WTC11 (cell line): ENCODE measurements at regions of chr1 and their contacts with region 1.

Region 1: DNA sequence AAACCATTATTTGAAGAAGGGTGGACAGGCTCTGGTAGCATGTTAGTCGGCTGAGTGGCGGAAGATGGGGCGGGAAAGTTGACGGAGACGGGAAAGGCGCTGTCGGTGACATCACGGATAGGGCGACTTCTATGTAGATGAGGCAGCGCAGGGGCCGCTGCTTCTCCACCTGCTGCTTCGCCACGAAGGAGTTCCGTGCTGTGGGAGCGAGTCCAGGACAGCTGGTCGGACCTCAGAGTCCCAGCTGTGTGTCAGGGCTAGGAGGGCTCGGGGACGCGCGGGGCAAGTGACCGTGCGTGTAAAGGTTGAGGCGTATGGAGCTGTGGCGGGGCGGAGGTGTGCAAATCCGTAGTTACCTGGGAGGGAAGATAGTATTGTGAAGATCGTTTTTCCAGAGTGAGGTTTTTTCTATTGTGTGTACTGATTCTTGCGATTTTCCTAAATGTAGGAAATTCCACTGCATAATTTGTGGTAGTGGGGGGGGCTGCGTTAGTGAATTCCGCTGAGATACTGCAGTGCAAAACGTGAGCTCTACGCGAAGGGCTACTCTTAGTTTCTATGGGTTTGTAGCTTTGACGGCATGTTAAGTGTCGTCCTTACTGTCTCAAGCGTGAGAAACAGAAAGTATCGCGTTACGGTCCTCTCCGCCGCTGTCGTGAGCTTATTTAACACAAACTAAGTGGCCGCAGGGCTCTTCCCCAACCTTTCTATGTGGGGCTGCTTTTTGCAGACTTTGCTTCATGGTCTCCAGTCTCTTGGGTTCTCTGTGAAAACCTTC is 111.2 kb upstream of the NBPF11 start:
- DNase-seq: peak; percentile 80
- ATAC-seq: peak; percentile 78
- H3K4me3 Mint-ChIP-seq: peak overlapping the region; percentile 84
- H3K27ac Mint-ChIP-seq: peak overlapping the region; percentile 100
- H3K4me1 Mint-ChIP-seq: peaks cover 31% of the 10 kb centered on the region
- H3K27me3 Mint-ChIP-seq: peaks cover 4% of the 10 kb centered on the region; the same call in 1 of the 2 replicates
- CTCF ChIP-seq: no peak

Region 2: DNA sequence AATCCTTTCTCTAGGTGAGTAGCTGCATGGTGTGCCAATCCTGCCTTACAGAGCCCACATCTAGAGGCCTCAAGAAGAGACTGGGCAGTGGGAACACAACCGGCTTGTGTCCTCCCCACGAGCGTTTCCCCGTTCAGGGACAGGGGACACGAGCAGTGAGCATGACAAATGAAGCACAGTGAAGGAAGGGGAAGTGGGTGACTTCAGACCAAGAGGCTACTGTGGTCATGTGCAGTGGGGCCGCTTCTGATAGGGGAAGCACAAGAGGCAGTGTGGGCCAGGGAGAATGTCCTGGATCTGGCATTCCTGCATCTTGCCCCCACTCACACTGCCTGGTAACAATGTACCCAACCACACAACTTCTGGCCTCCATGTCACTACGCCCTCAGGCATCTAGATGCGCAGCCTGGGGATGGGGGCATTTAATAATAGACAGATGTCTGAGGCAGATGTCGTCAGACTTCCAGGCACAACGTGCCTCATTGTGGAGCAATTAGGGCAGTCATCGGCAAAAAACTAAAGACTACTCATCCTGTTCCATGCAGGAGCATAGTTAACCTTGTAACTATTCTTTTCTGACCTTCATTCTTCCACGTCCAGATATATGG is 44.4 kb after region 1 on chr1:
- CTCF ChIA-PET with region 1: interaction called, 6 read pairs
- POLR2A ChIA-PET with region 1: interaction called, 20 read pairs
- DNase-seq: no peak
- ATAC-seq: no peak
- H3K4me3 Mint-ChIP-seq: no peak overlapping the region
- H3K27ac Mint-ChIP-seq: no peak overlapping the region
- H3K4me1 Mint-ChIP-seq: peaks cover 30% of the 10 kb centered on the region
- H3K27me3 Mint-ChIP-seq: peaks cover 65% of the 10 kb centered on the region
- CTCF ChIP-seq: no peak

Region 3: GRCh38 chr1:148318123-148318903 is 55.0 kb after region 1 on chr1:
- CTCF ChIA-PET with region 1: interaction called, 8 read pairs
- POLR2A ChIA-PET with region 1: interaction called, 10 read pairs
- DNase-seq: peak; percentile 48
- ATAC-seq: peak; percentile 76
- H3K4me3 Mint-ChIP-seq: peak overlapping the region; percentile 85
- H3K27ac Mint-ChIP-seq: peak overlapping the region; percentile 15; the same call in 1 of the 2 replicates
- H3K4me1 Mint-ChIP-seq: peaks cover 16% of the 10 kb centered on the region
- H3K27me3 Mint-ChIP-seq: peaks cover 61% of the 10 kb centered on the region
- CTCF ChIP-seq: no peak

Region 4: GRCh38 chr1:148334339-148335130 is 71.2 kb after region 1 on chr1:
- CTCF ChIA-PET with region 1: interaction called, 8 read pairs
- POLR2A ChIA-PET with region 1: interaction called, 81 read pairs
- DNase-seq: peak; percentile 86
- ATAC-seq: peak; percentile 87
- H3K4me3 Mint-ChIP-seq: peak overlapping the region; percentile 96
- H3K27ac Mint-ChIP-seq: peak overlapping the region; percentile 100
- H3K4me1 Mint-ChIP-seq: peaks cover 23% of the 10 kb centered on the region
- H3K27me3 Mint-ChIP-seq: peaks cover 5% of the 10 kb centered on the region
- CTCF ChIP-seq: no peak

Region 5: DNA sequence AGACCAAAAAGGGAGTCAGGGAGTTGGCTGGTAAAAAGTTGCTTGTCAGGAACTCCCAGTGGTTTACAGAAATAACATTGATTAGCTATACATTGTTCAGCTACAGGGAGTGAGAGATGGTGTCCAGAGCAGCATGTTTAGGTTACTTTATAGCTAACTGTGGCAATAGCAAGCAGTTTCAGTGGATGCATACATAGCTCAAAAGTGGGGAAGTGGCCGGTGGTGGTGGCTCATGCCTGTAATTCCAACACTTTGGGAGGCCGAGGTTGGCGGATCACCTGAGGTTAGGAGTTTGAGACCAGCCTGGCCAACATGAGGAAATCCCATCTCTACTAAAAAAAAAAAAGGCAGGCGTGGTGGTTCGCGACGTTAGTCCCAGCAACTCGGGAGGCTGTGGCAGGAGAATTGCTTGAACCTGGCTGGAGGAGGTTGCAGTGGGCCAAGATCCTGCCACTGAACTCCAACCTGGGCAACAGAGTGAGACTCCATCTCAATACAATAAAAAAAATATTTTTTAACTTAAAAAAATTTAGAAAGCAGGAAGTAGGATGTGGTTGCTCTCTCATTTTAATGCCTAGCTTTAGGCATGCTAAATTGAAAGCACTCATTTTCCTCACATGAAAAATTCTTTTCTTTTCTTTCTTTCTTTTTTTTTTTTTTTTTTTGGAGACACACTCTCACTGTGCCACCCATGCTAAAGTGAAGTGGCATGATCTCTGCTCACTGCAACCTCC is 110.0 kb after region 1 on chr1:
- CTCF ChIA-PET with region 1: no interaction called
- POLR2A ChIA-PET with region 1: no interaction called
- DNase-seq: no peak
- ATAC-seq: no peak
- H3K4me3 Mint-ChIP-seq: no peak overlapping the region
- H3K27ac Mint-ChIP-seq: peak overlapping the region; percentile 71; the same call in 1 of the 2 replicates
- H3K4me1 Mint-ChIP-seq: peaks cover 13% of the 10 kb centered on the region
- H3K27me3 Mint-ChIP-seq: no peaks in the 10 kb centered on the region; the same call in 1 of the 2 replicates
- CTCF ChIP-seq: no peak

Region 6: DNA sequence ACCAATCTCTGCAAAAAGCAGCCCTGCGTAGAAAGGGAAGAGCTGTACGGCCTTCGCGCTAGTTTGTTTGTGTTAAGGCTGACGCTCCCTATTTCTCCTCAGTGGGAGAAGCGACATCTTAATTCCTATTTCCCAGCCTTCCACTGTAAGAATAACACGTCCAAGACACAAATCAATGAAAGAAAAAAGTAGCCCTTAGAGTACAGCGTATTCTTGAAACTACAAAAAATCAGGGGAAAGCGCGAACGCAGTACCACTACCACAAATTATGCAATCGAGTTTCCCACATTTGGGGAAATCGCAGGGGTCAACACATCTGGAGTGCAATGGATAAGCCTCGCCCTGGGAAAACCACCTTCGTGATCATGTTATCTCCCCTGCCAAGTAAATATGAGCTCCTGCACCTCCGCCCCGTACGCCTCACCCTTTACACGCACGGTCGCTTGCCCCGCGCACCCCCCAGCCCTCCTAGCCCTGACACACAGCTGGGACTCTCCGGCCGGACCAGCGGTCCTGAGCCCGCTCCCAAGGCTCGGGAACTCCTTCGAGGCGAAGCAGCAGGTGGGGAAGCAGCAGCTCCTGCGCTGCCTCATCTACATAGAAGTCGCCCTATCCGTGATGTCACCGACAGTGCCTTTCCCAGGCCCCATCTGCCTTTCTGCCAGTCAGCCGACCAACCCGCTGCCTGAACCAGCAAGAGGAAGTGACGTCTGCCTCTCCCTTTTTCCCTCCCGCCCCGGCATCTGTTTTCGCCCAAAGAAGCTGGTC is 125.1 kb after region 1 on chr1:
- CTCF ChIA-PET with region 1: no interaction called
- POLR2A ChIA-PET with region 1: interaction called, 11 read pairs
- DNase-seq: peak; percentile 93
- ATAC-seq: peak; percentile 83
- H3K4me3 Mint-ChIP-seq: peak overlapping the region; percentile 82
- H3K27ac Mint-ChIP-seq: peak overlapping the region; percentile 93
- H3K4me1 Mint-ChIP-seq: peaks cover 30% of the 10 kb centered on the region
- H3K27me3 Mint-ChIP-seq: peaks cover 8% of the 10 kb centered on the region
- CTCF ChIP-seq: no peak